WTC11 (cell line): ENCODE measurements at regions of chr13 and their contacts with region 1.

Region 1: GRCh38 chr13:48769107-48769704 is 115.5 kb downstream of the CYSLTR2 start:
- DNase-seq: peak; percentile 85
- ATAC-seq: peak; percentile 99
- H3K4me3 Mint-ChIP-seq: no peak overlapping the region
- H3K27ac Mint-ChIP-seq: no peak overlapping the region
- H3K4me1 Mint-ChIP-seq: peaks cover 4% of the 10 kb centered on the region
- H3K27me3 Mint-ChIP-seq: peaks cover 4% of the 10 kb centered on the region; the same call in 1 of the 2 replicates
- CTCF ChIP-seq: peak; percentile 96

Region 2: DNA sequence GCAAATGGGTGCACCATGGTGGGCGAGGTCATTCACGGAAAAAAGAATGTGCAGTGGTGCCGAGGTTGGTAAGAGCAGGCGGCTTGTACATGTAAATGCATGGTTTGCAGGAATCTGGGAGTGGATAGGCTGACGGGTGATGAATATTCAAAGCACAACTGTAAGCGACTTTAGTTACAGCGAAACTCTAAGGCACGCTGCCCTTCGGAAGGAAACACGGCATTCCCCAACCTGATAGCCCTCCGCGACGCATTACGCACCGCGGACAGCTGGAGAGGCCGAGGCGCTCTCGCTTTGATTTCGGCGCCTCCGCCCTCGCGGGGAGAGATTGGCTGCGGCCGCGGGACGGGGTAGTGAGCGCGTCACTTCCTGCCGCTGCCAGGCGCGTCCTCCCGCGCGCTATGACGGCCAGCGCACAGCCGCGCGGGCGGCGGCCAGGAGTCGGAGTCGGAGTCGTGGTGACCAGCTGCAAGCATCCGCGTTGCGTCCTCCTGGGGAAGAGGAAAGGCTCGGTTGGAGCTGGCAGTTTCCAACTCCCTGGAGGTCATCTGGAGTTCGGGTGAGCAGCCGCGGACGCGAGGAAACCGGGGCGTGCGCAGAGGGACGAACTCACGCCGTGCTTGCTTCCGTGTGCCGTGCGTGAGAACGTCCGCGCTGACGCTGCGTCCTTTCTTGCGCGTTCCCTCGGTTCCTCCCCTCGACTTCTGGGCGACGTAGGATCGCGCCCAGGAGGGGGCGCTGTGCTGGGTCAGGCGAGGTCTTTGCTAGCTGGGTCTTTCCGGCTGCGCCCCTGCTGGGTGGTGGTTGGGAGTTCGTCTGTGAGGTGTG is 731.6 kb before region 1 on chr13 and contains the start of gene NUDT15:
- CTCF ChIA-PET with region 1: interaction called, 11 read pairs
- POLR2A ChIA-PET with region 1: no interaction called
- DNase-seq: peak; percentile 95
- ATAC-seq: peak; percentile 87
- H3K4me3 Mint-ChIP-seq: peak within 1 kb of the TSS; percentile 78
- H3K27ac Mint-ChIP-seq: peak within 1 kb of the TSS; percentile 100
- H3K4me1 Mint-ChIP-seq: peaks cover 22% of the 10 kb centered on the region
- H3K27me3 Mint-ChIP-seq: no peaks in the 10 kb centered on the region
- CTCF ChIP-seq: peak; percentile 96
- total RNA-seq, gene NUDT15: 42.8 to 48.8 TPM (median 45.6 TPM) in 3 replicates

Region 3: GRCh38 chr13:48126944-48127830 is 642.0 kb before region 1 on chr13:
- CTCF ChIA-PET with region 1: interaction called, 11 read pairs
- POLR2A ChIA-PET with region 1: no interaction called
- DNase-seq: peak; percentile 17
- ATAC-seq: peak; percentile 88
- H3K4me3 Mint-ChIP-seq: peak overlapping the region; percentile 20; the same call in 1 of the 2 replicates
- H3K27ac Mint-ChIP-seq: peak overlapping the region; percentile 95
- H3K4me1 Mint-ChIP-seq: peaks cover 19% of the 10 kb centered on the region
- H3K27me3 Mint-ChIP-seq: peaks cover 3% of the 10 kb centered on the region; the same call in 1 of the 2 replicates
- CTCF ChIP-seq: peak; percentile 63; the same call in 1 of the 2 replicates

Region 4: DNA sequence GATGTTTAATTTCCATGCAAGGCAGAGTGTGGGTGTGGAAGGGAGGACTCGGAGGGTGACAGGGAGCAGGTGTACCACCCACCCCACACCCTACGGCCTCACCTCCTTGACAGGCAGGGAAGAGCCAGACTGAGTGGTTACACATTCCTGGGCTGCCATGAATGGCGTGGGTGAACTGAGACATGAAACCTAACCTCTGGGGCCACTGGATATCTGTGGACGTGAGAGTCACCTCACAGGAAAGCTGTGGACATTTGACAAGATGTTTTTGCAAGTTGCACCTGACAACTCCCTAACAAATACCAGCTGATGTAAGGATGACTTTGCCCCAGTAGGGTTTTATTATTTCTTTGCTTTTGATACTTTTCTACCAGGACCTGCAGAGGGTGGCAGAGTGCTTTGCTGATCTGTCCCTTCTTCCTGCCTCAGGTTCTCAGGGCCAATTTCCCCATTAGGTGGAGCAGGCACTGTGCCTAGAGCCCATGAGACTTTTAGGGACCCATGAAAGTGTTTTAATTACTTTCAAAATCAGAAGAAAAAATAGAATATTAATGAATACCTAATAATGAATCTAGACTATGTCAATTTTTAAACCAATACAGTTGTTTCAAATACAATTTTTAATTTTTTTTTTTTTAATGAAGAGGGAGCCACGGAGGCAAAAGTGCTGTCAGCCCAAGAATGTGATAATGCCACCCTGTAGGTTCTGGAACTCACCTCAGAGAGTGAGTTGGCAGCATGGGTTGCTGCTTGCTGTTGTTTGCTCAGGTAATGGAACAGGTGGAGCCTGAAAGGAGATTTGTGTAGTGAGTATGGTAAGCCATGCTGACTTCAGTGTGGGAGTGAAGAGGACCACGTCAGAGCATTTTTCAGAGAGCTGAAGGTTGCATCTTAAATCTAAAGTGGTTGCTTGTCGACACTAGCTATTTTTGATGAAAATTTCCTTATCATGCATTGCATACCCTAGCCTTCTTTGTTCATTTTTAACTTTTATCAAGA is 173.5 kb before region 1 on chr13:
- CTCF ChIA-PET with region 1: interaction called, 25 read pairs
- POLR2A ChIA-PET with region 1: no interaction called
- DNase-seq: peak; percentile 32
- ATAC-seq: peak; percentile 79
- H3K4me3 Mint-ChIP-seq: no peak overlapping the region
- H3K27ac Mint-ChIP-seq: no peak overlapping the region
- H3K4me1 Mint-ChIP-seq: peaks cover 53% of the 10 kb centered on the region
- H3K27me3 Mint-ChIP-seq: peaks cover 2% of the 10 kb centered on the region; the same call in 1 of the 2 replicates
- CTCF ChIP-seq: no peak

Region 5: GRCh38 chr13:48738311-48738710 is 30.9 kb before region 1 on chr13:
- CTCF ChIA-PET with region 1: interaction called, 10 read pairs
- POLR2A ChIA-PET with region 1: no interaction called
- DNase-seq: no peak
- ATAC-seq: peak; percentile 47
- H3K4me3 Mint-ChIP-seq: no peak overlapping the region
- H3K27ac Mint-ChIP-seq: no peak overlapping the region
- H3K4me1 Mint-ChIP-seq: peaks cover 29% of the 10 kb centered on the region
- H3K27me3 Mint-ChIP-seq: no peaks in the 10 kb centered on the region
- CTCF ChIP-seq: no peak

Region 6: GRCh38 chr13:48750588-48751383 is 18.4 kb before region 1 on chr13:
- CTCF ChIA-PET with region 1: interaction called, 10 read pairs
- POLR2A ChIA-PET with region 1: no interaction called
- DNase-seq: no peak
- ATAC-seq: no peak
- H3K4me3 Mint-ChIP-seq: no peak overlapping the region
- H3K27ac Mint-ChIP-seq: no peak overlapping the region
- H3K4me1 Mint-ChIP-seq: peaks cover 7% of the 10 kb centered on the region
- H3K27me3 Mint-ChIP-seq: no peaks in the 10 kb centered on the region
- CTCF ChIP-seq: no peak